ENCODE measurements at regions of chr1 and their contacts with region 1.

Region 1: GRCh38 chr1:16625497-16626408 is 12.4 kb upstream of the NBPF1 start:
- DNase-seq: no peak
- H3K4me3 ChIP-seq: no peak overlapping the region
- H3K27me3 ChIP-seq: no peaks in the 10 kb centered on the region
- CTCF ChIP-seq: no peak

Region 2: DNA sequence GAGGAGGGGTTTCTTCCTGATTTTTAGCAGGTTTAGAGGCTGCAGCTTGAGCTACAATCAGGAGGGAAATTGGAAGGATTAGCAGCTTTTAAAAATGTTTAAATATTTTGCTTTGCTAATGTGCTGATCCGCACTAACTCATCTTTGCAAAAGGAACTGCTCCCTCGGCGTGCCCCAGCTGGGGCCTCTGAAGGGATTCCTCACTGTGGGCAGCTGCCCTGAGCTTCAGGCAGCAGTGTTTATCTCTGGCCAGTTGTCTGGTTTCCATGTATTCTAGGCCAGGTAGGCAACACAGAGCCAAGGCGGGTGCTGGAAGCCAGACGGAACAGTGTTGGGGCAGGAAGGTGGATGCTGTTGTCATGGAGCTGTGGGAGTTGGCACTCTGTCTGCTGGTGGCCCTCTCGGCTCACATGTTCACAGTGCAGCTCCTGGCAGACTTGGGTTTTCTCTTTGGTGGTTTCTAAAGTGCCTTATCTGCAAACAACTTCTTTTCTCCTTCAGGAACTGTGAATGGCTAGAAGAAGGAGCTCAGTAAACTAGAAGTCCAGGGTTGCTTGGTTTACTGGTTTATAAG is 166.3 kb before region 1 on chr1:
- CTCF ChIA-PET with region 1: no interaction called
- POLR2A ChIA-PET with region 1: no interaction called
- DNase-seq: no peak
- H3K4me3 ChIP-seq: no peak overlapping the region
- H3K27me3 ChIP-seq: no peaks in the 10 kb centered on the region
- CTCF ChIP-seq: no peak

Region 3: GRCh38 chr1:16607433-16607851 is 18.3 kb before region 1 on chr1:
- CTCF ChIA-PET with region 1: interaction called, 92 read pairs
- POLR2A ChIA-PET with region 1: interaction called, 6 read pairs
- DNase-seq: no peak
- H3K4me3 ChIP-seq: no peak overlapping the region
- H3K27me3 ChIP-seq: no peaks in the 10 kb centered on the region
- CTCF ChIP-seq: no peak

Region 4: DNA sequence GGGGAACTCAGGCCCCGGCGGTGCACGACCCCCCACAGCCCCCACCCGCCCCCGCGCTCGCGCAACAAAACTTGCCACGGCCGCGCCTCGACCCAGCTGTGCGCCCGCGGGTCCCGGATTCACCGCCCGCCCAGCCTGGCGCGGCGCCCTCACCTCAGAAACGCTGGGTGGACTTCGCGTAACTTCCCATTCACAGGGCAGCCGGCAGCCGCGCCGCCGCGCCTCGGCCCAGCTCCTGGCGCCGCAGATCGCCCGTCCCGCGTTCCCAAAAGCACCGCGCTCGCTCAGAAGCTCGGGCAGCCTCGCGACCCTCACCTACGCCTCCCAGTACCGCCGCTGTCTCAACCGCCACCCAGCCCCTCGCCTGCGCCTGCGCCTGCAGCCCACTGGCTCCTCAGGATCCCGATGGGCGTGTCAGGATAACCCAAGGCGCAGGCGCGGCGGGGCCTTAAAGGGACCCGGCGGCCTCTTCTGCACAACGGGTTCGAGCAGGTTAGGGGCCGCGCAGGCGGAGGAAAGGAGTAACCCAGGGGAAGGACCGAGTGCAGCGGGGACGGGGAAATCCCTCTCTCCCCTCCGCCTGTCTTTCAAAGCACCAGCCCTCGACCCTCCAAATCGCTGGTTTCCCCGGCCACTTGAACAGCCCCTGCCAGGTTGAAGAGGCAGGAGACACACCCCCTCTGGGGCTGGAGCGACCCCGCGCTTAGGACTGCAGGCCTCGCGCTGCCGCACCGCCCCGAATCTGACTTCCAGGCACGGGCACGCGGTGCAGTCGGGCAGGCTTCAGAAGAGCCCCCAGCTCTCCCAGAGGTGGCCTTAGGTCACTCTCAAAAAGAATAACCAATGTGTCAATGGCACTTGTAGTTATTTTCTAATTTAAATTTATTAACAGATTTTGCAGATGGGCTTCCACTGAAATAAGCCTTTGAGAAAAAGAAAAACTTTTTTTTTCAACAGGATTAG is 12.3 kb before region 1 on chr1 and contains the start of gene NBPF1:
- CTCF ChIA-PET with region 1: interaction called, 92 read pairs
- POLR2A ChIA-PET with region 1: interaction called, 12 read pairs
- DNase-seq: peak; percentile 73
- H3K4me3 ChIP-seq: peak within 1 kb of the TSS; percentile 75
- H3K27me3 ChIP-seq: no peaks in the 10 kb centered on the region
- CTCF ChIP-seq: peak; percentile 11; the same call in 1 of the 2 replicates
- polyA plus RNA-seq, gene NBPF1: 28.3 and 36.9 TPM in 2 replicates

Region 5: GRCh38 chr1:16644193-16644481 is 18.4 kb after region 1 on chr1:
- CTCF ChIA-PET with region 1: interaction called, 12 read pairs
- POLR2A ChIA-PET with region 1: no interaction called
- DNase-seq: no peak
- H3K4me3 ChIP-seq: peak overlapping the region; percentile 89
- H3K27me3 ChIP-seq: no peaks in the 10 kb centered on the region
- CTCF ChIP-seq: no peak